Activated naive CD4-positive, alpha-beta T cell treated with anti-CD3 and anti-CD28 coated beads, Interleukin-2, amount 10 ng/mL, durations not matched to agents 7 days and 5 days (primary cell): ENCODE measurements at regions of chr1 and their contacts with region 1.

Region 1: GRCh38 chr1:65459397-65459768 is 38.9 kb downstream of the LEPR start:
- DNase-seq: no peak
- H3K4me3 Mint-ChIP-seq: no peak overlapping the region
- H3K27ac Mint-ChIP-seq: no peak overlapping the region
- H3K4me1 Mint-ChIP-seq: peaks cover 19% of the 10 kb centered on the region
- H3K27me3 Mint-ChIP-seq: no peaks in the 10 kb centered on the region

Region 2: DNA sequence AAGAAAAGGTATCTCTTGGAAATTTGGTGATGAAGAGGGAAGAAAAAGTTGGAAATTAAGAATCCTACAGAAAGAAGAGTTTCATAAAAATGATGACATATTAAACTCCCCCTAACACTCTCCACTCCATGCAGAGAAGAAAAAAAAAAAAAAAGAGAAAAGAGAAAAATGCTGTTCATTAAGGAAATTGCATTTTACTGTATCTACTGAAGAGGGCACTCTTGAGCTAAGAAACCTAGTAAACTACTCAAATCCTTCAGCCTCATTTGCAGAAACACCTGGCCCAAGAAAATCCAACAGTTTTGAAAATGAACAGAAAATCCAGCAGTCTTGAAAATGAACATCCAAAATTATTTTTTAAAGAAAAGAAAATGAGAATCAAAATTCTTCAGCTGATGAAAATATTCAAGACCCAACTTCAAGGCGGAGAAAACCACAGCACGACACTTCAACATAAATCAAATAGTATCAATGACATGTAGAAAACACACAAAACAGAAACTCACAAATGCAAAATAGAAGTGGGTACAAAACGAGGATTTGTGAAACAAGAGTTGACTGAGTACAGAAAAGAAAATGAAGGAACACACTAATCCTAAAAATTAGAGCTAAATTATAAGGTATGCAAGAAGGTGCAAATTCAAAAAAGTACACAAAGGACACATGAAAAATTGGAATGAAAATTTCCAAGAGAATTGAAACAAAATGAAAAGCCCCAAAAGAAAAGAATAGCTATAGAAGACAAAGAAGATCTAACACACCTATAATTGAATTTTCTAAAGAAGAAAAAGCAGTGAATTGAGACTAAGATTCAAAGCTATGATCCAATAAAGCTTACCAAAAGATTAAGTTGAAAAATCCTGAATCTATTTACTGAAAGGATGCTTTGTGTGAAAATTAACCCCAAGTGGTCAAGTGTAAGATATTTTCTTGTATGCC is 223.2 kb before region 1 on chr1:
- CTCF ChIA-PET with region 1: interaction called, 42 read pairs
- DNase-seq: no peak
- H3K4me3 Mint-ChIP-seq: no peak overlapping the region
- H3K27ac Mint-ChIP-seq: no peak overlapping the region
- H3K4me1 Mint-ChIP-seq: peaks cover 5% of the 10 kb centered on the region
- H3K27me3 Mint-ChIP-seq: peaks cover 19% of the 10 kb centered on the region

Region 3: DNA sequence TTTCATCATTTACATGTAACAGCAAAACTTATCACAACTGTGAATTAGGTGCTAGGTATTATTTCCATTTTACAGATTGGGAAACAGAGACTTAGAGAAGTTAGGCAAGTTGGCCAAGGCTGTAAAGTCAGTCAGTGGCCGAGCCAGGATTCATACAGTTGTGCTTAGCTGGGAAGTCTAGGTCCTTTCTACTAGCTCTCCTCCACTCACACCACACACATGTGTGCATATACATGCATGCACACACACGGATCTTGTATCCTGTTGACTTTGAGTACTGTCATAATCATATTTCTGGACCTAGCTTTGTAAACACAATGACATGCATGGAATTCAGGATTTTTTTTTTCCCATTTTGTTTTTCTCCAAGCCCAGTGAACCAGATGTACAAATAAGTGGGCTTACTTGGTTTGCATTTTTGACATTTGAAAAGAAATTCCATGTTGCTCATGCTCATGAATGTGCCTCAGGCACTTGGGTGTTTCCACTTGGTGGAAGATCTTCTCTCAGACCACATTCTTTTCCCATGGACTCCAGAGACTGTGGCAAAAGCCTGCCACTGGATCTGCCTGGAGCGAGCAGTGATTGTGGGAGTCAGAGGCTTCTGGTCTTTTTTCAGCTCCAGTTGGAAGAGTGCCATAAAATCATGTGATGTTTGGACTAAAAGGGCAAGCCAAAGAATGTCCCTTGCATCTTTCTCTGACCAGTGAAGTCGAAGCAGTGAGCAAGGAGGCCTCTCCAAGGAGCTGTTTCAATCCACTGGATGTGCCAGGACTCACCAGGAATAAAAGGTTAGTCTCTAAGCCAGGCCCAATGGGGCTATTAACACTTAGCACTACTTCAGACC is 211.6 kb before region 1 on chr1:
- CTCF ChIA-PET with region 1: interaction called, 10 read pairs
- DNase-seq: no peak
- H3K4me3 Mint-ChIP-seq: no peak overlapping the region
- H3K27ac Mint-ChIP-seq: no peak overlapping the region
- H3K4me1 Mint-ChIP-seq: no peaks in the 10 kb centered on the region
- H3K27me3 Mint-ChIP-seq: peaks cover 31% of the 10 kb centered on the region

Region 4: DNA sequence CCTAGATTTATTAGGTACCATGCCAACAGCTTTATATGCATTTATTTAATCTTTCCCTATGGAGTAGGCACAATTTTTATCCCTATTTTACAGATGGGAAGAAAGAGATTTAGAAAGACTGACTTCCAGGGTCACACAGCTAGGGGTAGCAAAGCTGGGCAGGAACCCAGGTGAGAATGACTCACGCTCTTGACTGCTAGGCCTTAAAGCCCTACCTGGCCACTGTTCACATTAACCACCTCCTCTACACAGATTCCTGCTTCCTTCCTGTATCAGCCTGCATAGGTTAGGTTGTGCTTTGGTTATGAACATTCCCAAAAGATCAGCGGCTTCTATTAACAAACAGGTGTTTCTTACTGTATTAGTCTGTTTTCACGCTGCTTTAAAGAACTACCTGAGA is 96.8 kb before region 1 on chr1:
- CTCF ChIA-PET with region 1: no interaction called
- DNase-seq: no peak
- H3K4me3 Mint-ChIP-seq: no peak overlapping the region
- H3K27ac Mint-ChIP-seq: no peak overlapping the region
- H3K4me1 Mint-ChIP-seq: no peaks in the 10 kb centered on the region
- H3K27me3 Mint-ChIP-seq: no peaks in the 10 kb centered on the region

Region 5: GRCh38 chr1:65904681-65905083 is 445.3 kb after region 1 on chr1:
- CTCF ChIA-PET with region 1: no interaction called
- DNase-seq: no peak
- H3K4me3 Mint-ChIP-seq: no peak overlapping the region
- H3K27ac Mint-ChIP-seq: no peak overlapping the region
- H3K4me1 Mint-ChIP-seq: no peaks in the 10 kb centered on the region
- H3K27me3 Mint-ChIP-seq: no peaks in the 10 kb centered on the region